Left colon (tissue), 2 donors: ENCODE measurements at regions of chr18 and their contacts with region 1.

Region 1: DNA sequence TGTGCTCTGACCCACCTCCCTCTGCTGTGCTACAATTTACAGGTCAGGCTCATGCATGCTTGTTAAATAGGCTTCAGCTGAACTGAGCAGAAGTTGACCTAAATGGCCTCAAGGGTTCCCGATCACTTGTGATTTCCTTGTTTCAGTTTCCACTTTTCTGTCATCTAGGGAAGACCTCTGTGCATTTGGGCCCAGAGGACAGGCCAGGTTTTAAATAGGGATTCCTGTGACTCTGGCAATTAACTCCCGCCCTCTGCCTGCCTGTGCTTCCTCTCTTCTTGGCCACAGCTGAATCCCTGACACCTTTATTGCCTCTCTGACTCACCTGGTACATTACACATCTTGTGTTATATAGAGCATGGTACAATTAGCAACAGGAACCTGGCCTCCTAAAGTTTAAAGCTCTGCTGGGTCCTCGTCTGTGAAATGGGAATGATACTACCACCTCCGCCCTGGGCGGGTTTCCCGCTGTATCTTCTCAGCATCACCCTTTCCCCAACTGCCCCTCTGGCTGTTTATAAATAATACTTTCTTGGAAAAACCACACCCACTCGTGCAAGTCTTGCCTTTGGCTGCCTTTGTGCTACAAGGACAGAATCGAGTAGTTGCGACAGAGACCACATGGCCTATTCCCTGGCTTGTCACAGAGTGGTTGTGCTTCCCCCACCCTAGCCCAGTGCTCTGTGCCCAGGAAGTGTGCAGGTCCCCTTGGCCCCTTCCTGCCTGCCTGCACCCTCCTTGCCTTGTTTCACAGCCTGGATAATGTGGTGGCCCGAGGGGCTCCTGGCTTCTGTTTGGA is 7.9 kb downstream of the CABLES1 start:
- DNase-seq: peak; percentile 56 to 80
- ATAC-seq: peak; percentile 89

Region 2: GRCh38 chr18:22900558-22901238 is 242.5 kb before region 1 on chr18:
- intact Hi-C with region 1: no loop called
- DNase-seq: no peak
- ATAC-seq: no peak

Region 3: DNA sequence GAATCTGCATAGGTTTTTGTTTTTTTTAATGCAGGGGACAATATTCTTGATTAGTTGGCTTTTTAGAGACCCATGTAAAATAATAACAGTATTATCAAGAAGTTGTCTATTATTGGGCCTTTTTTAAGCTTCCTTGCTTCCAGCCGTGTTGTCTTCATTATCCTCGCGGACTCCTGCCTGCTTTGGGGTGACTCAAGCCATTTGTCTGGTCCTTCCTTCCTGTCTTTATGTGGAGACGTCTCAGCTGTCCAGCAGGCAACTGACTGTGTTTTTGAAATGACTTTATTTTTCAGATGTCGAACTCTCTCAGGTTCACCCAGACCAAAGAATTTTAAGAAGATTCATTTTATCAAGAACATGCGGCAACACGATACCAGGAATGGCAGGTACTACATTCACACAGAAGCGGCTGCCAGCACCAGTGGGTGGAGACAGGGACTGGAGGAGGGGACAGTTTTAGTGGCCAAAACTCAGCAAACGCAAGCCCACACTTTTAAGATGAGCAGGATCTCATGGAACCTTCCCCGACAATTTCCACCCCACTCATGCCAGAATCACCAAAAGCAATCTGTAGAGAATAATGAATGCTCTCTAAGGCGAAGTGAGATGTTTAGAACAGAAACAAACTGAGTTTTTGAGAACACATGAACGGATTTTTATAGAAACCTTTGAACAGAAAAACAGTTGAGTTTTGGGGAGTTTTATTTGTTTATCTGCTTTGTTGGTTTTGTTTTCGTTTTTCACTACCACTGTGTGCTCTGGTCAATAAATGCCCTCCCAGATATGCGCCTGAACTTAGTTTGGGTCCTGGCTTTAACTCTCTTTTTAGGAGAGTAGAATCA is 51.2 kb after region 1 on chr18:
- intact Hi-C with region 1: loop called in 1 of 2 experiments (anchors 10 kb)
- DNase-seq: no peak
- ATAC-seq: no peak